Gastrocnemius medialis (tissue), 4 donors: ENCODE measurements at regions of chr3 and their contacts with region 1.

Region 1: DNA sequence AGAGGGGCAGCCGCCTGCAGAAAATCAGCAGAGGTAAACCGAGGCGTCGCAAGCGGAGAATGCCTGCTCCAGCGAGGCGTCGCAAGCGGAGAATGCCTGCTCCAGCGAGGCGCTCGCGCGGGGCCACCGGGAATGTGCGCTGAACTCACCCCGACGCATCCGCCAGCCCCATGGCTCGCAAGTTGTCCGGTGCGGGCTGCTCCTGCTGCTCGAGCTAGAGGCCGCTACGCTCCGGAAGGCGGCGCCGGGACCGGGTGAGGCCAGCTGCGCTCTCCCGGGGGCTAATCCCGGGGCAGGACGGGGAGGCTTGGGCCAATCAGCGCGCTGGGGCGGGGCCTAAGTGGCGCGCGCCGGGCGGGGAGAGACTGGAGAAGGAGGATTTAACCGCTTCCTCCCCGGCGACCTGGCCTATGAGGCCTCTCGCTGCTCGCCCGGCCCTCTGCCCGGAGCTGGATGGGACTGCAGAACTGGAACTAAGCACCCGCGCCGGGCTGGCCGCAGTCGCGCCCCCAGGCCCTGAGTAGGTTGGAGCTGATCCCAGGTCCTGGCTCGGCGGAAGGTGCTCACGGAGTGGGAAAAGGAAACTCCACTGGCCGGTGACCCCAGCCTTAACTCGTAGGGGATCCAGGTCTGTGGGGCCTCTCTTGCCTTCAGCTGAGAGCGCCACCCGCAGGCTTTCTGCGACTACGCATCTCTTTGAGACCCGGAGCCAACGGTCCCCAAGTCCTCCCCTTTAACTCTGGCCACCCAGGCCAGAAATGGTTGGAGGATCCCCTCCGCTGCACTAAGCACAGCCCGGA is at the start of gene SLC26A6:
- DNase-seq: peak; percentile 94 to 95
- ATAC-seq: peak; percentile 93 to 94
- H3K4me3 ChIP-seq: peak within 1 kb of the TSS; percentile 60 to 97 (median 84)
- H3K27ac ChIP-seq: peak within 1 kb of the TSS; percentile 84 to 92 (median 90)
- H3K4me1 ChIP-seq: peaks cover 16 to 24% of the 10 kb centered on the region in 2 donors
- H3K27me3 ChIP-seq: no peaks in the 10 kb centered on the region
- CTCF ChIP-seq: peak in 4 of 5 experiments; percentile 30 to 59 (median 53)
- POLR2A ChIP-seq: peak; percentile 51 to 68
- total RNA-seq, gene SLC26A6: 6.1 to 17.3 (median 10.1) TPM

Region 2: DNA sequence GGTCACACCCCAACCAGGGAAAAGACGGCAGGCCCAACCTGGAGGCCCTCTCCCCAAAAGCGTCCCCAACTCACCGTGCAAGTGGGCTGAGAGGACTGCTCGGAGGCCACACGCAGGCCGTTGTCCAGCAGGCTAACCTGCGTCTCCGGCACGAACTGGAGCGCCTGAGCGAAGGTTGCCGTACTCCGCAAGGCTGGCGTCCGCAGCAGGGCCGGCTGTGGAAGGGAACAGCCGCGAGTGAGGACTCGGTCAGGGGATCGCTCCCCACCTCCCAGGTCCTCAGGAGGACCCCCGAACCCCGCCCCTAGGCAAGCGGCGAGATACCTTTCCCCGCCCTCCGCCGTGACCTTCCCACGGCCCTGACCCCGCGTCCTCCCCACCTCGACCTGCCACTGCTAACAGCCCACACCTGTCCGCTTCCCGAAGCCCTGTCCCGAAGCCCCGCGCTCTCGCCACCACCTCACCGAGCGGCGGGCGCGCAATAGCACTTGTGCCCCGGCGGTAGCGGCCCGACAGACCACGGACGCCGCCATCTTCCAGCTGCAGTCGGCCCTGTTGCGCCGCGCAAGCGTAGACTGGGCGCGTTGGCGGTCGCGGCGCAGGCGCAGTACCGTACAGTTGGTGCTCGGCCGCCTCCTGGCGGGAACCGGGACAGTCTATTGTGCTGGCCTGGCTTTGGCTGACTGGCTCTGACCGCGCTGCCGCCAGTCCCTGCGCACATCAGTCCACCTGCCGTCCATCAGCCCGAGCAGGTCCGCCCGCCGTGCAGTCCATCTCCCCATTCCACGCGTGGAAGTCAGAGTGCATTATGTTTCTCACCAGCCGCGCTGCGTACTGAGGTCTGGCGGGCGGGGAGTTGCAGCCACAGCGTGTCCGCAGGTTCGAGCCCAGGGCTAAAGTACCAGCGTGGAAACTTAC is 26.1 kb before region 1 on chr3 and contains the start of gene UQCRC1:
- in situ Hi-C with region 1: no loop called
- intact Hi-C with region 1: loop called (anchors 1 kb)
- DNase-seq: peak; percentile 88 to 91
- ATAC-seq: peak; percentile 98
- H3K4me3 ChIP-seq: peak within 1 kb of the TSS; percentile 87 to 96 (median 94)
- H3K27ac ChIP-seq: peak within 1 kb of the TSS; percentile 90 to 98 (median 95)
- H3K4me1 ChIP-seq: peaks cover 16 to 21% of the 10 kb centered on the region in 2 donors
- H3K27me3 ChIP-seq: no peaks in the 10 kb centered on the region
- CTCF ChIP-seq: peak; percentile 85 to 91 (median 86)
- POLR2A ChIP-seq: peak; percentile 93
- total RNA-seq, gene UQCRC1: 679 to 861 (median 720) TPM

Region 3: GRCh38 chr3:48656061-48656840 is 20.8 kb after region 1 on chr3:
- in situ Hi-C with region 1: no loop called
- intact Hi-C with region 1: loop called (anchors 1 kb)
- DNase-seq: peak; percentile 46 to 81
- ATAC-seq: peak; percentile 85 to 91
- H3K4me3 ChIP-seq: peak overlapping the region; percentile 56 to 89 (median 64)
- H3K27ac ChIP-seq: peak overlapping the region; percentile 35 to 84 (median 62)
- H3K4me1 ChIP-seq: peaks cover 0 to 12% of the 10 kb centered on the region in 2 donors
- H3K27me3 ChIP-seq: peaks cover 0 to 8% (median 7%) of the 10 kb centered on the region in 3 donors
- CTCF ChIP-seq: peak; percentile 55 to 76 (median 73)
- POLR2A ChIP-seq: no peak

Region 4: DNA sequence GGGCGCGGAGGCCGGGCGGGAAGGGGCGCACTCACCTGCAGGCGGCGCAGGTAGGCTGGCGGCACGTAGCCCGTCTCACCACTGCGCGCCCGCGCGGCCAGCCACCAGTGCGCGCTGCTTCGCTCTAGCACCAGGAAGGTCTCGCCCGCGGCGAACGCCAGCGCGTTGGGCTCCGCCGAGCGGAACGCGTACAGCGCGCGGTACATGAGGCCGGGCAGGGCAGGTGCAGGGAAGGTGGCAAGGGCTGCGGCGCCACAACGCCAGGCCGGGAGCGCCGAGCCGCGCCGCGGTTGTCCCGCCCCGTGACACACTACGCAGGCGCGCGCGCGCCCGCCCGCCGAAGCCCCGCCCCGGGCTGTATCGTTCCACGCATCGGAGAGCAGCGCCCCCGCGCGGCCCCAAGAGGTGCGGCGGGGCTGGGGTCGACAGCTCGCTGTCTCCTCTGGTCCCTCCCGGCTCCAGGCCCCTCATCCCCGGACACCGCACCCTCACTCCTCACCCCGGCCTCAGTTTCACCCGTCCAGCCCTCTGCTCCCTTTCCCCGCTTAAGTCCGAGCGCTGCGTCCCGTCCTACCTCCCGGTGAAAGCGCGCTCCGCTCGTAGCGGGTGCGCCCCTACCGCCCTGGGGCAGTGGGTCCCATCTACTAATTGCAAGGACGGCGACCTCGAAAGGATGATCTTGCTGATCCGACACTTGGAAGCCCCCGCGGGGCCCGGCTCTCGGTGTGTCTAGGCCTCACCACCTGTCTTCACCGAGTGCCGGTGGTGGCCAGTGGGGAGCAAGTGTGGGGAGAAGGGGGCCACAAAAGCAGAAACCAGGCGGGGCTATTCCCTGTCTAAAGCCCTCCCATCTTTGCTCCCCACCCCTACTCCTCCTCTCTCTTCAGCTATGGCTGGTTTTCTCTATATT is 50.4 kb after region 1 on chr3 and contains the start of gene NCKIPSD:
- in situ Hi-C with region 1: no loop called
- intact Hi-C with region 1: loop called (anchors 1 kb)
- DNase-seq: peak; percentile 66 to 82
- ATAC-seq: peak; percentile 92 to 95
- H3K4me3 ChIP-seq: peak within 1 kb of the TSS; percentile 69 to 96 (median 84)
- H3K27ac ChIP-seq: peak within 1 kb of the TSS; percentile 73 to 92 (median 90)
- H3K4me1 ChIP-seq: peaks cover 30 to 36% of the 10 kb centered on the region in 2 donors
- H3K27me3 ChIP-seq: no peaks in the 10 kb centered on the region
- CTCF ChIP-seq: peak; percentile 64 to 96 (median 90)
- POLR2A ChIP-seq: peak; percentile 62 to 77
- total RNA-seq, gene NCKIPSD: 13.2 to 33.1 (median 19.4) TPM